GM12878 (cell line): ENCODE measurements at regions of chr1 and their contacts with region 1.

Region 1: GRCh38 chr1:32773018-32773763 is 44.0 kb downstream of the YARS1 start:
- DNase-seq: peak; percentile 20
- ATAC-seq: peak; percentile 95
- H3K4me3 ChIP-seq: no peak overlapping the region
- H3K27ac ChIP-seq: no peak overlapping the region
- H3K4me1 ChIP-seq: no peaks in the 10 kb centered on the region
- H3K27me3 ChIP-seq: no peaks in the 10 kb centered on the region
- CTCF ChIP-seq: peak; percentile 93 to 97 (median 96); a peak in 5 of 6 replicates
- EP300 ChIP-seq: no peak
- POLR2A ChIP-seq: peak; percentile 8; the same call in 1 of the 2 replicates
- RAD21 ChIP-seq: peak; percentile 85

Region 2: DNA sequence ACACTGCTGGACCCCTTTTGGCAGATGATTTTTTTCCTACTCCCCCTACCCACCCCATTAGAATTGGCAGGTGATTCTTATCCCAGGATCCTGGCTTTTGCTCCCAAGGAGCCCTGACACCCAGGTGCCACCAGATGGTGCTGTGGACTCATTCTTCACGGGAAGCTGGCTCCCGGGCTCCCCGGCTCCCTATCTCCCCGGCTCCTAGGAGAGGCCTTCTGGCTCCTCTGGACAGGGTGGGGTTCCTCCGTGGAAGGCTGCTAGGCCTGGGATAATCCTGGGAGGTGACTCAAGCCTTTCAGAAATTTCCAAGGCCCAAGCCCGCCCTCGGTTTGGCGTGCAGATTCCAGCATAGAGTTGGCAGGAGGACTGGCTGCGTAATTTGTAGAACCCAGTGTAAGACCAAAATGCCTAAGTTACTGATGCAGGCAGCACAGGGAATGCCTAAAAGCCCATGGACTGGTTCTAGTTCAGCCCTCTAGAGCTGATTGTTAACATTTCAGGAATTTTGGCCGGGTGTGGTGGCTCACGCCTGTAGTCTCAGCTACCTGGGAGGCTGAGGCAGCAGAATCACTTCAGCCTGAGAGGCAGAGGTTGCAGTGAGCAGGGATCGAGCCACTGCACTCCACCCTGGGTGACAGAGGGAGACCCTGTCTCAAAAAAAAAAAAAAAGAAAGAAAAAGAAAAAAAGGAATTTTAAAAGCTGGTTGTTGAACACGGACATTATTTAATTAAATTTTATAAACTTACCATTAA is 372.1 kb before region 1 on chr1:
- CTCF ChIA-PET with region 1: interaction called, 23 read pairs
- POLR2A ChIA-PET with region 1: no interaction called
- RAD21 ChIA-PET with region 1: no interaction called
- SMC1A ChIA-PET with region 1: interaction called, 5 read pairs
- in situ Hi-C with region 1: no loop called
- intact Hi-C with region 1: loop called (anchors 5 kb)
- DNase-seq: no peak
- ATAC-seq: peak; percentile 95
- H3K4me3 ChIP-seq: no peak overlapping the region
- H3K27ac ChIP-seq: no peak overlapping the region
- H3K4me1 ChIP-seq: no peaks in the 10 kb centered on the region
- H3K27me3 ChIP-seq: no peaks in the 10 kb centered on the region
- CTCF ChIP-seq: peak; percentile 87 to 94 (median 88)
- EP300 ChIP-seq: no peak
- POLR2A ChIP-seq: no peak
- RAD21 ChIP-seq: peak; percentile 81

Region 3: GRCh38 chr1:32521165-32521564 is 252.0 kb before region 1 on chr1:
- CTCF ChIA-PET with region 1: interaction called, 50 read pairs
- POLR2A ChIA-PET with region 1: no interaction called
- RAD21 ChIA-PET with region 1: interaction called, 18 read pairs
- SMC1A ChIA-PET with region 1: interaction called, 33 read pairs
- in situ Hi-C with region 1: no loop called
- intact Hi-C with region 1: loop called (anchors 1 kb)
- DNase-seq: no peak
- ATAC-seq: peak; percentile 14
- H3K4me3 ChIP-seq: peak overlapping the region; percentile 50; the same call in 1 of the 2 replicates
- H3K27ac ChIP-seq: no peak overlapping the region
- H3K4me1 ChIP-seq: peaks cover 9% of the 10 kb centered on the region
- H3K27me3 ChIP-seq: no peaks in the 10 kb centered on the region
- CTCF ChIP-seq: 0 out of 6 replicates have a peak, but pooled peaks of 1 of the 3 experiments have one; percentile 14
- EP300 ChIP-seq: no peak
- POLR2A ChIP-seq: no peak
- RAD21 ChIP-seq: 0 out of 2 replicates have a peak, but pooled peaks have one; percentile 29

Region 4: GRCh38 chr1:32733582-32734321 is 39.4 kb before region 1 on chr1:
- CTCF ChIA-PET with region 1: interaction called, 12 read pairs
- POLR2A ChIA-PET with region 1: interaction called, 5 read pairs
- RAD21 ChIA-PET with region 1: interaction called, 6 read pairs
- SMC1A ChIA-PET with region 1: interaction called, 4 read pairs
- in situ Hi-C with region 1: no loop called
- intact Hi-C with region 1: no loop called
- DNase-seq: no peak
- ATAC-seq: peak; percentile 84
- H3K4me3 ChIP-seq: no peak overlapping the region
- H3K27ac ChIP-seq: no peak overlapping the region
- H3K4me1 ChIP-seq: peaks cover 7% of the 10 kb centered on the region
- H3K27me3 ChIP-seq: no peaks in the 10 kb centered on the region; a peak in 1 of 4 replicates
- CTCF ChIP-seq: peak in 1 of 3 experiments; percentile 2; a peak in 1 of 6 replicates
- EP300 ChIP-seq: 0 out of 4 replicates have a peak, but pooled peaks of 1 of the 2 experiments have one; percentile 27
- POLR2A ChIP-seq: no peak
- RAD21 ChIP-seq: no peak

Region 5: DNA sequence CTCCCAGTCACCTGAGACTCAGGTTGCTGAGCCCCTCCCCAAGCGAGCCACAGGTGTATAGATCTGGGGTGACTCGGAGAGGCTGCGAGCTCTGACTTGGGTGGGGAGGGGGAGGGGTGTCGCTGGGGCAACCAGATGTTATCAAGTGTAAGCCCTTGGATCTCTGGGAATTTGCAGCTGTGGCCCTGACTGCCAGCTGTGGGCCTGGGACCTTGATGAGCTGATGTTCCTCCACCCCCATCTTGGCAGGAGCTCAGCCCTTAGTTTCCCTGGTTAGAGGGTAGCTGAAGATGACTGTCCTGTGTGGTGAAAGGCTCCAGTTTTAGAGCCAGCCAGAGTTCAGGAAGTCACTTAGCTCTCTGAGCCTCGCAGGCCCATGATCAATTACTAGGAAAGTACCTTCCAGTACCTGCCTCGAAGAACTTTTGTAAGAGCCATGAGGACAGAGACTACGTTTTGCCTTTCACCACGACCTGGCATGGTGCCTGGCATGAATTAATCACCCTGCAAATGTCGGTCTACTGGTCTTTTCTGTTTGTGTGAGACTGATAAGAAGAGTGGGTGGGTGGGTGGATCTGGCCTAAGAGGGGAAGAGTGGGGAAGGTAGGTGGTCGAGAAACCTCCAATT is 11.8 kb before region 1 on chr1:
- CTCF ChIA-PET with region 1: interaction called, 12 read pairs
- POLR2A ChIA-PET with region 1: no interaction called
- RAD21 ChIA-PET with region 1: interaction called, 5 read pairs
- SMC1A ChIA-PET with region 1: interaction called, 12 read pairs
- in situ Hi-C with region 1: no loop called
- intact Hi-C with region 1: no loop called
- DNase-seq: peak; percentile 26
- ATAC-seq: peak; percentile 75
- H3K4me3 ChIP-seq: no peak overlapping the region
- H3K27ac ChIP-seq: no peak overlapping the region
- H3K4me1 ChIP-seq: peaks cover 14% of the 10 kb centered on the region
- H3K27me3 ChIP-seq: no peaks in the 10 kb centered on the region; a peak in 1 of 4 replicates
- CTCF ChIP-seq: no peak
- EP300 ChIP-seq: no peak
- POLR2A ChIP-seq: no peak
- RAD21 ChIP-seq: no peak